ENCODE measurements at regions of chr11 and their contacts with region 1.

Region 1: GRCh38 chr11:133078591-133079404 is 453.5 kb downstream of the OPCML start:
- DNase-seq: no peak
- H3K4me3 ChIP-seq: no peak overlapping the region
- H3K27me3 ChIP-seq: peaks cover 6% of the 10 kb centered on the region
- CTCF ChIP-seq: peak; percentile 91

Region 2: DNA sequence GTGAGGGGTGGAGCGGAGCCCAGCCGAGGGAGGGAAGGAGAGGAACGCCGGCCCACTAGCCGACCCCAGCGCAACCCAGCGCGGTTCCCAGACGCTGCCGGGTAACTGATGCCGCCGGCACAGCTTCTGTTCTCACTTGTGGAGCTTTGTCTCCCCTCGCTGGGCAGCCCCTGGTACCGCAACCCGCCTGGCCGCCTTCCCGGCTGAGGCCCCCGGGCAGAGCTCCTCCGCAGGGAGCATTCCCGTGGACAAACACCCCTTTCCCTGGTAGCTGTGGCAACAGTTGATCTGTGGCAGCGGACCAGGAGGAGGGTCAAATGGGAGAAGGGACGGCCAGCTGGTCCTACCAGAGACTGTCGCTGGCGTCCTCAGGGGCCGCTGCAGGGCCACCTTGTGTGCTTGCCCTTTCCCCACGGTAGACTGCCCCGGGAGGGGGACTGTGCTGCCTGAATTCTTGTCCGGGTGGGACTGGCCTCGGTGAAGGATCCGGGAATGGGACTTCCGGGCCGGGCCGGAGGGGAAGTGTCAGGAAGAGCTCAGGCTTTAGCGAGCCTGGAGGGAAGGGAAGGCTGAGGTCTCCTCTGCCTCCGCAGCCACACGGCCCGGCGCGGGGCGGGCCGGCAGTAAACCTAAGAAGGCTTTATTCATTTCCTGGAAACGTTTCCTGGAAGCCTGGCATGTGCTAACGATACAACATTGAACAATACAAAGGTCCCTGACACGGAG is 14.5 kb before region 1 on chr11:
- CTCF ChIA-PET with region 1: interaction called, 37 read pairs
- POLR2A ChIA-PET with region 1: no interaction called
- DNase-seq: no peak
- H3K4me3 ChIP-seq: peak overlapping the region; percentile 57
- H3K27me3 ChIP-seq: peaks cover 4% of the 10 kb centered on the region; the same call in 1 of the 2 replicates
- CTCF ChIP-seq: peak; percentile 79

Region 3: GRCh38 chr11:133104009-133104744 is 25.4 kb after region 1 on chr11:
- CTCF ChIA-PET with region 1: no interaction called
- POLR2A ChIA-PET with region 1: no interaction called
- DNase-seq: no peak
- H3K4me3 ChIP-seq: no peak overlapping the region
- H3K27me3 ChIP-seq: no peaks in the 10 kb centered on the region
- CTCF ChIP-seq: no peak

Region 4: DNA sequence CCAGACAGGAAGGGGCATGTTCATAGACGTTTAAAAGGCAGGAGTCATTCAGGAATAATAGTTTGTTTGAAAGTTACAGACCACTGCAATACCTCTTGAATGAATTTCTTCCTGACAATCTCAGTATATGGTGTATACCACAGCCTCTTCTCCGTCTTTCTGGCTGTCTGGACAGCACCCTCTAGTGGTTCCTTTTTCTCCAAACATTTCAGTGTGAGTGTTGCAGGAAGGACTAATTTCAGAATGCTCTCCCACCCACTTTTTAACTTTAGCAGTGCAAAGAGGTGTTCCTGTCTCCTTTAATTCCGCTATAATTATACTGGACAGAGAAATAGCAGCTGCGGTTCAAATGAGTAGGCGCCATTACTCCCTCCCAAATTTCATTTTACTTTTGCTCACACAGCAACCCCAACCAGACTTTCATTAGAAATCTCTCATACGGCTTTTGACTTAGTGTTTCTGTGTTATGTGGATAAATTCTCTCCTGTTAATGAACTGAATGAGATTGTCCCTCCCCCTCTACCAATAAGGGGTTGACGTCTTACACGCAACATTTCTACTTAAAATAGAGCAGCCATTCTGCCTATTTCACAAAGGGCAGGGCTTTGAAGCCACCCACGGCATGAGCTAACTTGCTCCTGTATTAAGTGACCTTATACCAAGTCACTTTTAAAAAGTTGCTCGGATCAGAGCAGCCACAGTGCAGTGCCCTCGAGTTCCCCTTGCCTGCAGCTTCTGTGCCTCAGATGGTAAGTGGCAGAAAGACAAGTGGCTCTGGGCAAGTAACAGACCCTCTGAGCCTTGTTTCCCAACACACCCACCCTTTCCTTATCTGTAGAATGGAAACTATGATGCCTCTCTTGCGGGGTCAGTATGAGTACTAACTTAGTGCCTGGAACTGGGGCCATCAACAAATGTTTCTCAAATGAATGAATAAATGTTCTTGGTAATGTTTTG is 84.9 kb after region 1 on chr11:
- CTCF ChIA-PET with region 1: interaction called, 13 read pairs
- POLR2A ChIA-PET with region 1: no interaction called
- DNase-seq: no peak
- H3K4me3 ChIP-seq: no peak overlapping the region
- H3K27me3 ChIP-seq: peaks cover 1% of the 10 kb centered on the region; the same call in 1 of the 2 replicates
- CTCF ChIP-seq: peak; percentile 70

Region 5: GRCh38 chr11:133834682-133835592 is 756.1 kb after region 1 on chr11:
- CTCF ChIA-PET with region 1: interaction called, 10 read pairs
- POLR2A ChIA-PET with region 1: no interaction called
- DNase-seq: no peak
- H3K4me3 ChIP-seq: no peak overlapping the region
- H3K27me3 ChIP-seq: no peaks in the 10 kb centered on the region
- CTCF ChIP-seq: 0 out of 2 replicates have a peak, but pooled peaks have one; percentile 33